KBM-7 (cell line): ENCODE measurements at regions of chr17 and their contacts with region 1.

Region 1: DNA sequence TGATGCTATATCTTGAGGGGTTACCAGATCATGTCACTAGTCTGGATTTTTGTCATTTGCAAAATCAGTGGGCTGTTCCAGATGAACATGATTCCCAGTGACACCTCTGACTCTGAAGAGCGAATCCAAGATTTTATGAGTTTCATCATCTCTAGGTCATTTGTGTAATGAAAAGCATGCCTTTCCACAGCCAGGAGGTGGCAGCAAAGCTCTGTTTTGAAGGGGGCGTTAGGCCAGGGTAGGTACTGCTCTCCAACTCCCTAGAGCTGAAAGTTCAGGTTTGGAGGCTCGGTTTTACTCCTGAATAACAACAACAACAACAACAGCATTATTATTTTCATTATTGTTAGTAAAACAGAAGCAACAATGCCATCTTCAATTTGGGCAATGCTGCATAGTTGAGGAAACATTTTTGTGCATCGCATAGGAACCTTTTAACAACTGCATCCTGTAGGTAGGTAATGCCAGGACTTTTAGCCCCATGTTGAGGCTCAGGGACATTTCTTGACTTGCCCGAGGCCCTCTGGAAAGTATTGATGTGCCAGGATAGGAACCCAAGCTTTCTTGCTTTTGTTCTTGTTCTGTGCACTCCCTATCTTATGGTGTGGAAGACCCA is 77.0 kb downstream of the MYH13 start:
- DNase-seq: peak; percentile 56

Region 2: GRCh38 chr17:10099051-10099571 is 196.7 kb before region 1 on chr17:
- in situ Hi-C with region 1: no loop called
- DNase-seq: no peak

Region 3: DNA sequence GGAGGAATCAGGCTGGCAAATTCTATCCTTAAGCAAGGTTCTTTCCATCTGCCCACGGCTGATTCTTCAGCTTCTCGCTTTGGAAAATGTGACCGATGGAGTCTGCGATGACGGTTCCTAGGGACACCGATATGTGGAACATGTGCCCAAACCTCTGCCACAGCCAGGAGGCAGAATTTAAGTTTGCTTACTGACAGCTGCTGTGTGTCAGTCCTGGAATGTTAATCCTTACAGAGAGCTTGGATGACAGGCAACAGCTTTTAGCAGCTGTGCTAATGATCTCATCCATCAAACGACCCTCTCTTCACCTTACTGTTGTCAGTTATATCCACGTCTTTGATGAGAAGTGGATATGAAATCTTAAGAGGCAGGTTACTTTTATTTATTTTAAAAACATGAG is 88.3 kb after region 1 on chr17:
- in situ Hi-C with region 1: loop called (anchors 25 kb)
- DNase-seq: no peak